ENCODE measurements at regions of chr12 and their contacts with region 1.

Region 1: DNA sequence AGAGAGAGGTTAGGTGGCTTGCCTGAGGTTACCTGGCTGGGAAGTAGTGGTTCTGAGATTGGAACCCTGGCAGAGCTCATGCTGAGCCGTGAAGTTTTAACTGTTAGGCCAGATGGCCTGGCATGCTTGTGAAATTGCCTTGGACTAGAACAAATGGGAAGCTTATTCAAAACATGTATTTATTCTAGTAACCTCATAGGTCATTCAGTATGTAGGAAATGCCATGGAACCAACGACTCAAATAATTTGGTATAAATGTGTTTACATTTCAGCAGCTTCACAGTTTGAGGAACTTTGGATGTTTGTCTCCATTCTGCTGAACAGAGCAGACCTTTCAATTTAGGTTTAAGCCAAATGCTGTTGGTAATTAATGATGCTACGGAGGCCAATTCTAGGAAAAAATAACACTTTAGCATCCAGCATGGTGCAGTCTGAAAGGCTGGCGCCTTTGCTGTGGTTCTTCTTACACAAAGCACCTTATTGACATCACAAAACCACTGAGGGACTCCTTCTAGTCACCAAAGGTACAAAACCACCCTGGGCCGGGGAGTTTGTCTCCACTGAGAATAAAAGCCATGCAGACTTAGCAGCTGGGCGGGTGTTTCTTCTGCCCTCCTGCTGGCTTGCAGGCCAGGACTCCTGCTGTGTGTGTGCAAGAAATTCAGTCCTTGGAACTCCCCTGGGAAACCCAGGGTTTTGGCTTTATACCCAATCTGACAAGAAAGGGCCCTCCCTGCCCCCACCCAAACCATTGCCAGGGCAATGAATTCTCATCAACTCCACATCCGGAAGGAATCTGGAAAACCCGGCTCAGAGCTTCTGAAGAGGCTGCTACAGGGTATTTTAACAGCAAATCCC is 64.2 kb downstream of the ELK3 start:
- DNase-seq: peak in 25 of 35 experiments; percentile 19 to 60 (median 36)
- ATAC-seq: peak in 3 of 4 experiments; percentile 24 to 82 (median 36)
- H3K4me3 ChIP-seq: no peak overlapping the region
- H3K4me3 Mint-ChIP-seq: no peak overlapping the region
- H3K27ac ChIP-seq: peak overlapping the region; percentile 32
- H3K27ac Mint-ChIP-seq: no peak overlapping the region
- H3K4me1 ChIP-seq: peaks cover 6 to 32% of the 10 kb centered on the region in 2 experiments
- H3K4me1 Mint-ChIP-seq: peaks cover 10 to 19% (median 17%) of the 10 kb centered on the region in 3 donors
- H3K27me3 ChIP-seq: no peaks in the 10 kb centered on the region
- H3K27me3 Mint-ChIP-seq: no peaks in the 10 kb centered on the region

Region 2: GRCh38 chr12:94957006-94957405 is 1301.3 kb before region 1 on chr12:
- CTCF ChIA-PET with region 1: no interaction called
- POLR2A ChIA-PET with region 1: interaction called in 1 of 2 experiments, 11 read pairs
- DNase-seq: no peak
- ATAC-seq: no peak
- H3K4me3 ChIP-seq: no peak overlapping the region
- H3K4me3 Mint-ChIP-seq: no peak overlapping the region
- H3K27ac ChIP-seq: no peak overlapping the region
- H3K27ac Mint-ChIP-seq: no peak overlapping the region
- H3K4me1 ChIP-seq: no peaks in the 10 kb centered on the region
- H3K4me1 Mint-ChIP-seq: peaks cover 0 to 6% (median 2%) of the 10 kb centered on the region in 3 donors
- H3K27me3 ChIP-seq: peaks cover 0 to 5% of the 10 kb centered on the region in 2 experiments
- H3K27me3 Mint-ChIP-seq: peaks cover 18 to 21% of the 10 kb centered on the region in 2 donors

Region 3: GRCh38 chr12:96164951-96165811 is 93.2 kb before region 1 on chr12:
- CTCF ChIA-PET with region 1: no interaction called
- POLR2A ChIA-PET with region 1: no interaction called
- DNase-seq: no peak
- ATAC-seq: no peak
- H3K4me3 ChIP-seq: no peak overlapping the region
- H3K4me3 Mint-ChIP-seq: no peak overlapping the region
- H3K27ac ChIP-seq: no peak overlapping the region
- H3K27ac Mint-ChIP-seq: no peak overlapping the region
- H3K4me1 ChIP-seq: no peaks in the 10 kb centered on the region
- H3K4me1 Mint-ChIP-seq: no peaks in the 10 kb centered on the region
- H3K27me3 ChIP-seq: peaks cover 0 to 4% of the 10 kb centered on the region in 2 experiments
- H3K27me3 Mint-ChIP-seq: no peaks in the 10 kb centered on the region

Region 4: DNA sequence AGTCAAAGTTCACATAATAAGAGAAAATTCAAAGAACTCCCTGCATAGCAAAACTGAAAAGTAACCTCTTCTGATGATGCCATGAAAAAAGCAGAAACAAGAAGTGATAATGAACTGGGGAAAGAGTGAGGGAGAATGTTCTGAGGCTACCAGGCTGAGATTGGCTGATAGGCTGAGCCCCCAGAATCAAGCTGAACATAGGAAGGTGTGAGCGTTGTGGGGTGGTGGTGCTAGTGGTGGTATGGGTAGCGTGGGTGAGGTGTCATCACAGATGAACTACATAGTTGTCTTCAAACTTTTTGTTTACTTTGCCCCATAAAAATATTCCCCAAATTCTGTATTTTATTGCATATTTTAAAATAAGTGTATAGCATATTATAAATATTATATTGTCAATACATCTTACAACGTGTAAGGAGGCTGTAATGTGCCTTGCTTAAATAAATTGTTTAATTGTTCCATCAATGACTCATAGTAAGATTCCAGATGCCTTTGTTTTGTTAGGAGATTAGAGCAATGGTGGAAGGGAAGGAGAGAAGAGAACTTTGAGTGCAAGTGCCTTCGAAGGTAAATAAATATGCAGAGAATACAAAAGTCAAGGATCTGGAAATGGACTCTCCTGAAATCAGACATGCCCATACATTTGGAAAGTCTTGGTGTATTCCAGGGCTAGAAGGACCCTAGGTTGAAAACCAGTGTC is 215.2 kb after region 1 on chr12:
- CTCF ChIA-PET with region 1: interaction called in 1 of 2 experiments, 11 read pairs
- POLR2A ChIA-PET with region 1: interaction called in 1 of 2 experiments, 4 read pairs
- DNase-seq: peak in 24 of 35 experiments; percentile 12 to 66 (median 34)
- ATAC-seq: peak in 2 of 4 experiments; percentile 44 to 56
- H3K4me3 ChIP-seq: no peak overlapping the region
- H3K4me3 Mint-ChIP-seq: no peak overlapping the region
- H3K27ac ChIP-seq: no peak overlapping the region
- H3K27ac Mint-ChIP-seq: no peak overlapping the region
- H3K4me1 ChIP-seq: peaks cover 0 to 15% of the 10 kb centered on the region in 2 experiments
- H3K4me1 Mint-ChIP-seq: peaks cover 0 to 10% (median 10%) of the 10 kb centered on the region in 3 donors
- H3K27me3 ChIP-seq: no peaks in the 10 kb centered on the region
- H3K27me3 Mint-ChIP-seq: no peaks in the 10 kb centered on the region